GM10248 (cell line): ENCODE measurements at regions of chr2 and their contacts with region 1.

Region 1: GRCh38 chr2:73408198-73408597 is 22.6 kb downstream of the ALMS1 start:
- DNase-seq: peak; percentile 19
- CTCF ChIP-seq: no peak

Region 2: GRCh38 chr2:73307720-73308119 is 100.5 kb before region 1 on chr2:
- CTCF ChIA-PET with region 1: no interaction called
- POLR2A ChIA-PET with region 1: no interaction called
- DNase-seq: no peak
- CTCF ChIP-seq: no peak

Region 3: GRCh38 chr2:73373344-73373743 is 34.9 kb before region 1 on chr2:
- CTCF ChIA-PET with region 1: no interaction called
- POLR2A ChIA-PET with region 1: no interaction called
- DNase-seq: no peak
- CTCF ChIP-seq: no peak

Region 4: GRCh38 chr2:73418343-73418742 is 10.1 kb after region 1 on chr2:
- CTCF ChIA-PET with region 1: interaction called, 25 read pairs
- POLR2A ChIA-PET with region 1: no interaction called
- DNase-seq: no peak
- CTCF ChIP-seq: no peak

Region 5: DNA sequence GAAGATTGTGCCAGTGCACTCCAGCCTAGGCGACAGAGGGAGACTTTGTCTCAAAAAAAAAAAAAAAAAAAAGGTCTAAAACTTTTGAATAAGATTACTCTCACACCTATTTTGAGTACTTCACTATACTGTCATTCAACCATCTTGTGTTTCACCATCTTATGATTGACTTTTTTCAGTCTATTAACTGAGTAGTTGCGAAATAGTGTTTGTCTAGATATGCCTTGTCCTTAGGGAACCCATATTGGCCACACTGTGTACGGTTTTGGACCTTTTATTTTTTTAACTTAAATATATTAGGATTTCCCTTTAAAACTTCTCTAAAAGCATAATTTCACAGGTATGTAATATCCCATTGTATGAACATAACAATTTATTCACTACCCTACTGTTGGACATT is 49.8 kb after region 1 on chr2:
- CTCF ChIA-PET with region 1: no interaction called
- POLR2A ChIA-PET with region 1: no interaction called
- DNase-seq: no peak
- CTCF ChIP-seq: no peak